Upper lobe of right lung (tissue), 1 donor: ENCODE measurements at regions of chr10 and their contacts with region 1.

Region 1: DNA sequence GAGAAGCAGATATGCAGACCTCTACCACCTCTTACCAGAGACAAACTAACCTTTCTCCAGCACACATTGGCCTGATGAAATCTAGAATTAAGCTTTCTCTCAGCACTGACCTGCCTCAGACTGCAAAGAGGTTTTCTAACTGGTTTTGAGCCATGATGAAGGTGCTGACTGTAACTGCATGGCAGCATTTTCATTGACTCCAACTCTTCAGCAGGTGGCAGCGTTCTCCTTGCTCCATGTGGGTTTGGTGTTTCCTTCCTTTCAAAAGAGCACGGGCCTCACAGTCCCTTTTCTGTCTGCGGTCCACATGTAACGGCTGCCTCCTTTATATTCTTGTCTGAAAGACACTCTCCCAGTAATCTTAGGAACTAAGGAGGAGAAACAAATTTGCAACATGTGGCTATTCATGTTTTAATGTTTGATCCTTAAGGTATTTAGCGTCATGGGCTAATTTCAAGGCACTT is 12.6 kb downstream of the KLLN start:
- DNase-seq: no peak
- ATAC-seq: peak; percentile 96
- H3K4me3 ChIP-seq: no peak overlapping the region
- H3K27ac ChIP-seq: no peak overlapping the region
- H3K4me1 ChIP-seq: no peaks in the 10 kb centered on the region
- H3K27me3 ChIP-seq: no peaks in the 10 kb centered on the region
- CTCF ChIP-seq: peak; percentile 68

Region 2: DNA sequence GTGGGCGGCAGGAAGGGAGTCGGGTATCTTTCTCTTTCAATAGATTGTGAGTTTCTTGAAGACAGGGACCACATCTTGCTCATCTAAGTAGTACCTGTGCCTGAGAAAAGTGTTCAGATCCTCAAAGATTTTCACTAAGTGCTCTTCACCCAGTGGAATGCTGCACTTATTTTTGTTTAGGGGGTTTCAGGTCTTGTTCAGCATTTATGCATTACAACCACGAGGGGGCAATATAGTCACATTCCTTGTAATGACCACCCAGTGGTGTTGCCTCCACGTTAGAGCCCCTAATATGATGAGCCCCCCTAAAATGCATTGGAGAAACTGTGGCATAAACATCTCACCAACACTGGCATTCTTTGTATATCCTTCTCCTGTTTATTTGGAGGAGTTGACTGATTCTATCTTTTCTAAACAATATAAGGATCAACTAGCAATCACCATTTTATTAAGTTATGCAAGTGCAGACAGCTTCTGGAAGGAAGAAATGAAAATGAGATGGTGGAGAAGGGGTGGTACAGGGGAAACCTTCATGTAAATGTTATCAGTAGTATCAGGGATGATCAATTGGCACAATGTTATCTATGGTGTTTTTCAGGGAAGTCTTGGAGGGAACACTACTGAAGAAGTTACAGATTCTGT is 194.2 kb before region 1 on chr10:
- intact Hi-C with region 1: no loop called
- DNase-seq: no peak
- ATAC-seq: peak; percentile 16
- H3K4me3 ChIP-seq: no peak overlapping the region
- H3K27ac ChIP-seq: peak overlapping the region; percentile 69
- H3K4me1 ChIP-seq: peaks cover 15% of the 10 kb centered on the region
- H3K27me3 ChIP-seq: no peaks in the 10 kb centered on the region
- CTCF ChIP-seq: peak; percentile 71

Region 3: DNA sequence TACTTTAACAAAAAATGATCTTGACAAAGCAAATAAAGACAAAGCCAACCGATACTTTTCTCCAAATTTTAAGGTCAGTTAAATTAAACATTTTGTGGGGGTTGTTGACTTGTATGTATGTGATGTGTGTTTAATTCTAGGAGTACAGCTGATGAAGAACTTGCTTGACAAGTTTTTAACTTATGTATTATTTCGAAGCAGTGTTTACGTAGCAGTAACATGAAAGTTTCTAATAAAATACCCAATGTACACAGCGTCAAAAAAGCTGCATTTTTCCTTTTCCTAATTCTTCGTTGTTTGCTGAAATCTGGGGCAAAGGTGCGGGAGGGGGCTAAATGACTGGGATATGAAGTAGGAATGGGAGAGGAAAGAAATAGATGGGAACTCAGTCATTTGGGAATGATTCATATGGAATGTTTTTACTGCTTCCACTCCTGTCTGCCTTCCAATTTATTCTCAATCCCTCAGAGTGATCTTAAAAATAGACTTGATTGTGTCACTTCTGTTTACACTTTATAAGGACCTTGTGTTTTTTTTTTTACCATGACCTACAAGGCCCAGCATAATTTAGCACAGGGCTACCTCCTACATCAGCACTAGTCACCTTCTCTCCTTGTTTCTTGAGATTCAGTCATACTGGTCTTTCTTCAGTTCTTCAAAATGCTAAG is 110.4 kb after region 1 on chr10:
- intact Hi-C with region 1: no loop called
- DNase-seq: no peak
- ATAC-seq: peak; percentile 65
- H3K4me3 ChIP-seq: no peak overlapping the region
- H3K27ac ChIP-seq: no peak overlapping the region
- H3K4me1 ChIP-seq: peaks cover 8% of the 10 kb centered on the region
- H3K27me3 ChIP-seq: no peaks in the 10 kb centered on the region
- CTCF ChIP-seq: no peak

Region 4: GRCh38 chr10:88392222-88392621 is 541.4 kb after region 1 on chr10:
- intact Hi-C with region 1: loop called (anchors 10 kb)
- DNase-seq: no peak
- ATAC-seq: peak; percentile 61
- H3K4me3 ChIP-seq: no peak overlapping the region
- H3K27ac ChIP-seq: no peak overlapping the region
- H3K4me1 ChIP-seq: peaks cover 4% of the 10 kb centered on the region
- H3K27me3 ChIP-seq: no peaks in the 10 kb centered on the region
- CTCF ChIP-seq: no peak

Region 5: DNA sequence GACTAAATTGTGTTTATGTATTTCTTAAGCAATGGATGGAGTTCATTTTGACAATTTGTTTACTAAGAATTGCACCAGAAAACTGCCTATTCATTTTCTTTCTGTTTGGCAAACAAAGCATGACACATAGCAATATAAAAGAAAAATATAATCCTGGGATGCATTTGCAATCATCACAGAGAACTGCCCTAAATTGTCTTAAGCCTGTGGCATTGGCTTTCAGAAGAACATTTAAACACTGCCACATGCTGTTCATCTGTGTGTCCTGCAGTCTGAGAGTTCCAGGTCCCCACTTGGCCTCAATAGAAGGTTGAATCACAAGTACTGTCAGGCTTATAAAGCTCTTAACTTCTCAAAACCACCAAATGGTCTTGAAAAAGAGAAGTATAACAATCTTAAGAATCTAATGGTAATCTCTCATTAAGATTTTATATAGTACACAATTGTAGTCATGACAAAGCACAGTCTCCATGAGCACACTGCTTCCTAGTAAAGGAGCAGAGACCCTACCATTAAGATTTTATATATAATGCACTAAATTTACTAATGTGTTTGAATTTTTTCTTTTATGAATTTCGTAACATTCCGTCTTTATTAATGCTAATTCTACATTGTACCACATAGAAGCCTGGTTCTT is 702.5 kb after region 1 on chr10:
- intact Hi-C with region 1: loop called (anchors 10 kb)
- DNase-seq: no peak
- ATAC-seq: peak; percentile 96
- H3K4me3 ChIP-seq: no peak overlapping the region
- H3K27ac ChIP-seq: no peak overlapping the region
- H3K4me1 ChIP-seq: no peaks in the 10 kb centered on the region
- H3K27me3 ChIP-seq: no peaks in the 10 kb centered on the region
- CTCF ChIP-seq: peak; percentile 81